Panc1 (cell line): ENCODE measurements at regions of chr5 and their contacts with region 1.

Region 1: DNA sequence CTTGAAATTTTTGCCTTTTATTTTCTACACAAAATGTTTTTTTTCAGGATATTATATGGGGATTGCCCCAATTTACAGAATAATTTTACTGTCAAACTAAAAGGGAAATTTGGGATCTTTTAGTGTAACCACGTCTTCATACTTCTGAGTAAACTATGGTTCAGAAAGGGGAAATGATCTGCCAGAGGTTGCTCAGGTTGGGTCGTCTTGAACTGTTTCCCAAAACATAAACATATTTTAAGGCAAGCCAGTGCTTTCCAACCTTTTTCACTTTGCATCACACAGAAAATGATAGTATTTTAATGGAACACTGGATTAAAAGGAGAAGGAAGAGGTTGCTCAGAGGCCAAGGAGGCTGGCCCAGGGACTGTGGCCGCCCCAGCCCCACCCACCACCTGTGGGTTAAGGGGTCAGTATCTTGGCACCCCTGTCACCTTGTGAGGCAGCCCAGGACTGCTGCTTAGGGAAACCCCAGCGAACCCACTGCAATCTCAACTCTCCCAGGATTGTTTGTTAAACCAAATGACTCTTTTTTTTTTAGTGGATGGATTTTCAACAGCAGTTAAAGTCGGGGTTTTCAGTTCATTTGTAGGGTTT is 142.7 kb upstream of the DHFR start:
- DNase-seq: no peak
- ATAC-seq: no peak
- H3K4me3 ChIP-seq: no peak overlapping the region
- H3K27ac ChIP-seq: no peak overlapping the region
- H3K4me1 ChIP-seq: no peaks in the 10 kb centered on the region
- H3K27me3 ChIP-seq: no peaks in the 10 kb centered on the region
- CTCF ChIP-seq: no peak

Region 2: DNA sequence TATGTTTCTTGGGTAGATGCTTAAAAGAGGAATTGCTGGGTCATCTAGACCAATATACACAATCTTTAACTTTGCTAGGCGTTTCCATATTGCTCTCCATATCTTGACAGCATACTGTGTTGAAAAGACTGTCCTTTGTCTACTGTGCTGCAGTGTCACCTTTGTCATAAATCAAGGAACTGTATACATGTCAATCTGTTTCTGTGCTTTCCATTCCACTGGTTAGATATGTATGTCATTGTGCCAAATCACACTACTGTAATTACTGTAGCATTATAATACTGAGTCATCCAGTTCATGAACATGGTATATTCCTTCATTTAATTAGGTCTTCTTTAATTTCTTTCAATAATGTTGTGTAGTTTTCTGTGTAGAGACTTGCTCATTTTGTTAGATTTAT is 12.9 kb after region 1 on chr5:
- CTCF ChIA-PET with region 1: interaction called, 13 read pairs
- POLR2A ChIA-PET with region 1: no interaction called
- in situ Hi-C with region 1: no loop called
- intact Hi-C with region 1: no loop called
- DNase-seq: no peak
- ATAC-seq: no peak
- H3K4me3 ChIP-seq: no peak overlapping the region
- H3K27ac ChIP-seq: no peak overlapping the region
- H3K4me1 ChIP-seq: no peaks in the 10 kb centered on the region
- H3K27me3 ChIP-seq: no peaks in the 10 kb centered on the region
- CTCF ChIP-seq: no peak